Uterus (tissue), 4 donors: ENCODE measurements at regions of chr9 and their contacts with region 1.

Region 1: GRCh38 chr9:104927912-104928740 is at the start of gene ABCA1:
- DNase-seq: peak; percentile 86 to 95
- H3K4me3 ChIP-seq: peak within 1 kb of the TSS; percentile 51 to 78
- H3K27ac ChIP-seq: peak within 1 kb of the TSS; percentile 70
- H3K4me1 ChIP-seq: peaks cover 0 to 3% of the 10 kb centered on the region in 2 donors
- H3K27me3 ChIP-seq: no peaks in the 10 kb centered on the region
- CTCF ChIP-seq: no peak
- POLR2A ChIP-seq: peak in 1 of 2 donors; percentile 39
- total RNA-seq, gene ABCA1: 13.8 to 43.3 (median 25.9) TPM

Region 2: GRCh38 chr9:104970271-104970987 is 42.3 kb after region 1 on chr9:
- intact Hi-C with region 1: loop called (anchors 10 kb)
- DNase-seq: peak in 1 of 2 donors; percentile 51
- H3K4me3 ChIP-seq: no peak overlapping the region
- H3K27ac ChIP-seq: peak overlapping the region in 1 of 2 donors; percentile 46
- H3K4me1 ChIP-seq: peaks cover 5 to 6% of the 10 kb centered on the region in 2 donors
- H3K27me3 ChIP-seq: no peaks in the 10 kb centered on the region
- CTCF ChIP-seq: no peak
- POLR2A ChIP-seq: no peak

Region 3: DNA sequence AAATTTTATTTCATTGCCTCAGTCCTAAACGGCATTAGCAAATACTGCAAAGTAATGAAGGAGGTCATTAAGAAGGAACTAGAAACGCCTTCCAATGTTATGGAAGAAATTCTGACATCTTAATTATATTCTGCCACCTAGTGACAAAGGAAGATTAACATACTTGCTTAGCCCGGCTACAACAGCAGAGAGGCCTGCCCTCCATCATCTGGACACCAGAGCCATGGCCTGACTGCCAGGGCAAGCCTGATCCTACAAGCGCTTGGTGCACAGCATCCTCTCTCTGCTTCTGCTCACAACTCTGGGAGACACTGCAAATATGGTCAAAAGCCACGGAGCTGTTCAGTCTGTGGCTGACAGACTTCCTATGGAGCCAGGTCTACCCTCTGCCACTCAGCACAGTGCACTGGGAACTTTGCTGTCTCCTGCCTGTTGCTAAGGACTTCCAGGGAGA is 229.0 kb after region 1 on chr9:
- intact Hi-C with region 1: loop called (anchors 5 kb)
- DNase-seq: peak; percentile 50 to 69
- H3K4me3 ChIP-seq: no peak overlapping the region
- H3K27ac ChIP-seq: peak overlapping the region; percentile 31 to 42
- H3K4me1 ChIP-seq: peaks cover 0 to 4% of the 10 kb centered on the region in 2 donors
- H3K27me3 ChIP-seq: no peaks in the 10 kb centered on the region
- CTCF ChIP-seq: peak; percentile 38 to 75 (median 54)
- POLR2A ChIP-seq: no peak